Panc1 (cell line): ENCODE measurements at regions of chr1 and their contacts with region 1.

Region 1: GRCh38 chr1:200917291-200917817 is 22.7 kb downstream of the INAVA start:
- DNase-seq: no peak
- ATAC-seq: peak; percentile 54; the same call in 1 of the 2 replicates
- H3K4me3 ChIP-seq: no peak overlapping the region
- H3K27ac ChIP-seq: no peak overlapping the region
- H3K4me1 ChIP-seq: no peaks in the 10 kb centered on the region
- H3K27me3 ChIP-seq: no peaks in the 10 kb centered on the region
- CTCF ChIP-seq: no peak

Region 2: GRCh38 chr1:200392625-200393185 is 524.6 kb before region 1 on chr1:
- CTCF ChIA-PET with region 1: no interaction called
- POLR2A ChIA-PET with region 1: no interaction called
- in situ Hi-C with region 1: no loop called
- intact Hi-C with region 1: no loop called
- DNase-seq: no peak
- ATAC-seq: peak; percentile 54; the same call in 1 of the 2 replicates
- H3K4me3 ChIP-seq: no peak overlapping the region
- H3K27ac ChIP-seq: peak overlapping the region; percentile 81
- H3K4me1 ChIP-seq: peaks cover 30% of the 10 kb centered on the region
- H3K27me3 ChIP-seq: no peaks in the 10 kb centered on the region
- CTCF ChIP-seq: no peak

Region 3: DNA sequence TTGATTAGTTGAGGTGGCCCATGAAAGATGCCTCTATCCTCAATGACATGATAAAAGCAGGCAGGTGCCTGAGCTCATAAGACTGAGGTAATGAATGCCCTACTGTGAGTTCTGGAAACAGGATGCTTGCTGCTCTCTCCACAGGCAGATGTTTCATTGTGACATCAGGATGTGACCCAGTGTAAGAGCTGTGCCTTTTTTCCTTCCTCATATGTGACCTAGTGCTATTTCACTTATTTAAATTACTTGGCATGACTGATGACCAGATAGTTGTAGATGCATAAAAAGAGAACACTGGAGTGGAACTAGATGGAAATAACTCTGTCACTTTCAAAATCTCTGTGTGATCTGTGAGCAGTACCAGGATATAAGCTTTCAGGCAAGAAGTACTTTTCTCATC is 328.7 kb before region 1 on chr1:
- CTCF ChIA-PET with region 1: interaction called, 11 read pairs
- POLR2A ChIA-PET with region 1: no interaction called
- in situ Hi-C with region 1: no loop called
- intact Hi-C with region 1: no loop called
- DNase-seq: no peak
- ATAC-seq: no peak
- H3K4me3 ChIP-seq: no peak overlapping the region
- H3K27ac ChIP-seq: no peak overlapping the region
- H3K4me1 ChIP-seq: no peaks in the 10 kb centered on the region
- H3K27me3 ChIP-seq: no peaks in the 10 kb centered on the region
- CTCF ChIP-seq: no peak